Left cardiac atrium (tissue), 4 donors: ENCODE measurements at regions of chr11 and their contacts with region 1.

Region 1: DNA sequence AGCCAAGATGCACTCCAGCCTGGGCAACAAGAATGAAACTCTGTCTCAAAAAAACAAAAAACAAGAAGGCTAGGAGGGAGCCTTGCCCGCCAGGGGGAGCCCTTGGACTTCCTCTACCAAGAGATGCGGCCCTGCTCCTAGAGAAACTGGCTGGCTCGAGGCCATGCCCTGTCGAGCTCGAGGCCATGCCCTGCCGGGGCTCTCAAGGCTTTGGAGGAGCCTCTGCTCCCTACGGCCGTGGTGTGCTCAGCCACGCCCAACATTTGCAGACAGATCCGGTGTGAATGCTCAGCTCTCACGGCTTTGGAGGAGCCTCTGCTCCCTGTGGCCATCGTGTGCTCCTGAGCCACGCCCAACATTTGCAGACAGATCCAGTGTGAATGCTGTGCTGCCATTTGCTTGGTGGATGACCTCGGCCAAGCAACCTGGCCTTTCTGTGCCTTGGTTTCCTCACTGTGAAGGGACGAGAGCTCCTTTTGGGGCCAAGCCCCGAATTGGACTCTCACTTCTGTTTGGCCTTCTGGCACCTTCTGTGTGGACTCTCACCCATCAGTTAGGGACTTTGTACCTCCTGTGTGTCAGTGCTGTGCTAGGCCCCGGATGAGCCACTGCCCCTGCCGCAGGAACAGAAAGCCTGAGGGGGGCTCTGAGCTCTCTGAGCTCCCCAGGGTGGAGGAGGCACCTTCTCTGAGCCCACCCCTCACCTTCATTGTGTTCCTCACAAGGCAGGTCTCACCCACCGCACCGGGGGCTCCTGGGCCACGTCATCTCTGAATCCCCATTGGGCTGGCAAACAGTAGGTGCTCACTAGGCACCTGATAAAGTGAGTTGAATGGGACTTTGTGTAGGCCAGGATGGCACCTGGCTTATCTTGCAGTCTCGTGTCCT is 14.1 kb downstream of the C11orf24 start:
- DNase-seq: peak; percentile 97
- ATAC-seq: peak; percentile 82 to 90

Region 2: DNA sequence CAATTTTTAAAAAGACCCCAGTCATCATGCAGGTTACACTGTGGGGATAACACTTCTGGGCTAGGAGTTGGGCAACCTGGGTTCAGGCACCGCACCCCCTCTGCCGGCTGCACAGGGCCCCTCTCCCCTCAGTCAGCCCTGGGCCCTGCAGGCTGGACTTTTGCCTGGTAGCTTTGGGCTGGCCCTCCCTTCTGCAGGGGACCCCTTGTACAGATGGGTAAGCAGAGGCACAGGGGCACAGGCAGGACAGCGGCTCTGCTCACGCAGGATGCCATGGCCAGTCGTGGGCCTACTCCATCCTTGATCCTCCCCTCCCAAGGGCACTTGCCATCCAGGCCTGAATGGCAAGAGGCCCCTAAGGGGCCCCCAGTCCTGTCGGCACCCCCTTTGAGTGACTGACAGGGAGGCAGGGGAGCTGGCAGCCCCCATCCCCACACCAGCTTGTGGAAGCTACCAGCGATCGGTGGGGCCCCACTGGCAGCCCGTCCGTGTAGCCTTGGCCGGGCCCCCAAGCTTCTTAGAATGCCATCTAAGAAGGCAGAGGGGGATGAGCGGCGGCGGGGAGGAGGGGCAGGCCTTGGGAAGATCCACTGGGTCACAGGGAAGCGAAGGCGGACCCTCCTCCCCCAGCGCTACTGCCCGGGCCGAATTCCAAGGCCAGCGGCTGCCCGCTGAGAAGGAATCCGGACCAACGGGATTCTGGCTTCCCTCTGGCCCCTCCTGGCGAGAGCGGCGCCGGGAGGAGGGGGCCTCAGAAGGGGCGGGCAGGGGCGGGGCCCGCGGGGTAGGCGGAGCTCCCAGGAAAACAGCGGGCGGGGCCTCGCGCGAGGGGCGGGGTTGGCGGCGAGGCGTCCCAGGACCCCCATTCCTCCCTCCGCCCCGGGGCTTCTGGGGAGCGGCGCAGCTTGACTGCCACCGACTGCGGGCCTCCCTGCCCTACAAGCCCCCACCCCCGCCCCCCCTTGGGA is 129.7 kb before region 1 on chr11:
- intact Hi-C with region 1: no loop called
- DNase-seq: peak; percentile 64
- ATAC-seq: peak; percentile 91

Region 3: DNA sequence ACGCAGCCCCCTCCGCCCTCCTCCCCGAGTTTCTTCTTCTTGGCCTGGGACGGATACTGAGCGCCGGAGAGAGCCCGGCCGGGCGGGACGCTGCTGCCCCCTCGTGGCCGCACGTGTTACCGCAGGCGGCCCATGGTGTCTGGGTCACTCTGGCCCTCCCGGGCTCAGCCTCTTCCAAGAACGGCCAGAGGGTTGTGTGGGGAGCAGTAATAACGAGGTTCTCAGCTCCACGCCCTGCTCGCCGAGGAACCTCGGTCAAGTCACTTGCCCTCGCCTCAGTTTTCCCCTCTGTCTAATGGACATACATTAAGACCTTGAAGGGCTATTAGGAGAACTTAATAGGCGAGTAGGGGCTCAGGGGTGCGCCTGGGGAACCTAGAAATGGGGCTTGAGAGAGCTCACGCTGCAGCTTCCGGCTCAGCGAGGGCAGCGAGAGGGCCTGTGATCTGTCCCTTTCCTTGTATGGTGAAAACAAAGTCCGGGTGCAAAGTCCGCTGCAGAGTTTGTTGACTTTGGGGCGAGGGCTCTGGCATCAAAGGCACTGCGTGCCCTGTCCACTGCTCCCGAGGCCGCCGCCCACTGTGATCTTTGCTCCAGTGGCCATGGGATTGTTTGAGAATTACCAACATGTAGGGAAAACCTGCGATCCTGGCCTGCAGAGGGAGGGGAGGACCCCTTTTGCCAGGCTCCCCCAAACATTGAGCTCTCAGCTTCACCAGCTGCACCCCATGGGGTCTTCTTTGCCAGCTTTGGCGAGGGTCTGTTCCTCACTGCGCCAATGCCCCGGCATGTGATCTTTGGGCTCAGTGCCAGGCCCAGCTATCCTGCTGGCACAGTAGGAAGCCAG is 40.3 kb after region 1 on chr11:
- intact Hi-C with region 1: loop called (anchors 2 to 5 kb)
- DNase-seq: peak; percentile 83
- ATAC-seq: peak; percentile 97 to 98

Region 4: GRCh38 chr11:68354148-68354872 is 96.6 kb after region 1 on chr11:
- intact Hi-C with region 1: no loop called
- DNase-seq: peak; percentile 90
- ATAC-seq: peak; percentile 88 to 91

Region 5: DNA sequence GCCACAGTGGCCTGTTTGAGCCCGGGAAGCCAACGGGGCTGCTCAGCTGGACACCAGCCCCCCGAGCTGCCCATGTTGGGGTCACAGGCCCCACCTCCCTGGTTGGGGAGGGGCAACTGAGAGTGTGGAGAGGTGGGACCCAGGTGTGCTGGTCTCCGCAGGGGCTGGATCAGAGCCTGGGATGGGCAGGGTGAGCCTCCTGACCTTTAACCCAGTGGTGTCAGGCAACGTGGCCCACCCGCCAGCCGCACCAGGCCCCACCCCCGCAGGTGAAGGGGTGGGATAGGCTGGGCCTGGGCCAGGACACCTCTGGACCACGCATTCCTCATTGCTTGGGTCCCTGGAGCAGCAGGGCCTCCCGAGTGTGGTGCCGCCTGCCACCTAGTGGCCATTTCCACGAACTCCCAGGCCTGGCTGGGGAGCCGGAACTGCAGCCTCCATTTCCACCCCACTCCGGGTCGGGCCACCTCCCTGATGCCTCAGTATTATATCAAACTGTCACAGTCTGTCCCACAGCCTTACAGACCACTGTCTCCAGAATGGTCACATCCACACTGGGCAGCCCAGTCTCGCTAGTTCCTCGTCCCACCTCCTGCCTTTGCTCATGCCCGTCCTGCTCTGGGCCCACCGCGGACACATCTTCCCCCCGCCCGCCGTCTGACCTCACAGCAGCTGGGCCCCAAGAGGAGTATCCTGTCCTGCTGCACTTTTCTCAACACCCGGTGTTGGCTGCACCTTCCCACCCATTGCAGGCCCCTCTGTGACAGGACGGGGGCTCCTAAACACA is 189.5 kb after region 1 on chr11:
- intact Hi-C with region 1: loop called (anchors 2 to 10 kb)
- DNase-seq: peak; percentile 83
- ATAC-seq: peak; percentile 91 to 93

Region 6: DNA sequence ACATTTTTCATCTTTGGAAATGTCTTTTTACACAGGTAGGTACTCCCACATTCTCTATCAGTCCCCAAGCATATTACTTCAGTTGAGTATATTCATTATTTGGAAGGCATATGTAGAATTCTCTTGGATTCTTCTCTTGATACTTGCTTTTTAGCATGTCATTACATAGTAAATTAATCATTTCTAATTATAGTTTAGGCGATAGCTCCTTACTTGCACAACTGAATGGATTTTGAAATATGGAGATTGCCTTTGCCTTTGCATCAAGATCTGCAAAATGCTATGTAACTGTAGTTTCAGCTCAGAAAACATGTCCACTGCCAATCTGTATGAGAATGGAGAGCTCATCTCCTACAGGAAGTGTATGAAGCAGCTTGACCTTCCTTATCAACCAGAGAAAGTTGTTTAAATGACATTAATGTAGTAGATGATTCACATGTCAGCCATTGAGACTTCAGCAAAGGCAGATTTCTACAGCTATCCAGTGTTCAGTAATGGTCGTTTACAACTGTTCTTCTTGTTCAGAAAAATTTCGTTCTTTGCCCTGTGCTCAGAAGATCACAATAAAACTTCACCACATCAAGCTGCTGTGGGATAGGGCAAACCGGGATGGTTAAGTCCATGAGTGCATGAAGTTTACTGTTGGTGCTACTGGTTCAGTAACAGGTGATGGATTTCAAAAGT is 264.4 kb after region 1 on chr11:
- intact Hi-C with region 1: no loop called
- DNase-seq: no peak
- ATAC-seq: no peak